Heart left ventricle (tissue), 16 donors: ENCODE measurements at regions of chr20 and their contacts with region 1.

Region 1: DNA sequence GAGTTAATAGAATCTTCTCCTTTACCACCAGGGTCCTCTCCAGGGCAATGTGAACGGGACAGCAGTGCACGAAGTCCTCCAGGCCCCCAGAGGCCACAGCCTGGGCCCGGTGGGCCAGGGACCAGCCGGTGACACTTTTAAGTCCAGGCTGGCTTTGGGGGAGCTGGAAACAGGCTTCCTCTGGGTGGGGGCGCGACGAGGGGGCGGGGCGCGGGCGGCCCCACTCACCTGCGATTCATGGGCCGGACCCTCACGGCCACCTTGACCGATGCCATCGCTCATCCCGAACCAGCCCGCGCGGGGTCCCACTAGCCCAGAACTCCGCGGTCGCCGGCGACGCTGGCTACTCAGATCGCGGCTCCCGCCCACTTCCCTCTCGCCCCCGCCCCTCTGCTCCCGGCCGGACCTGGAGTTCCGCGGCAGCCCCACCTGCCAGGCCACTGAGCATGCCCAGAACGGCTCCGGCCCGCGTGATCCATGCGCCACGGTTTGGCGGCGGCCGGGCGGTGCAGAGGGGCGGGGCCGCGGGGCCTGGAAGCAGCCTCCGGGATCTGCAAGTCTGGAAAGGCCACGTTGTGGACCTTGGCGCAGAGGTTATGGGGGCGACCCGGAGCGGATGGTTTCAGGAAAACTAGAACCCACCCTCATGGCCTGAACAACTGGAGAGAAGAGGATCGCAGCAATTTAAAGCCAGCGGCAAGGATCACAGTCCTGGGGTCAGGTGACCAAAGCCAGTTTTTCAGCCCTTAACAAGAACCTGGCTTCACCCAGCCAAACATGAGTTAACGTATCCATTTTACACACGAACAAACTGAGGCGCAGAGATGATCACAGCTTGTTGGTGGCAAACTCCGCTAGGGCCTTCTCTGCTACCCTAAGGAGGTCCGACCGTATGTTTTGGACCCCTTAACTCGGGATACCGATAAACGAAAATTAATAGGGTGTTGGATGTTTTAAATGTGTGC is at the start of gene KIF16B:
- DNase-seq: peak; percentile 92 to 96 (median 93)
- ATAC-seq: peak; percentile 89 to 98 (median 96)
- H3K4me3 ChIP-seq: peak within 1 kb of the TSS; percentile 63 to 99 (median 89)
- H3K27ac ChIP-seq: peak within 1 kb of the TSS in 11 of 12 donors; percentile 53 to 86 (median 78)
- H3K4me1 ChIP-seq: peaks cover 0 to 36% (median 22%) of the 10 kb centered on the region in 12 donors
- H3K27me3 ChIP-seq: no peaks in the 10 kb centered on the region
- CTCF ChIP-seq: peak in 2 of 12 donors; percentile 1 to 16
- POLR2A ChIP-seq: no peak
- total RNA-seq, gene KIF16B: 12.6 to 31.8 (median 17.8) TPM

Region 2: GRCh38 chr20:16528078-16528477 is 45.2 kb before region 1 on chr20:
- intact Hi-C with region 1: loop called in 1 of 10 experiments (anchors 10 kb)
- DNase-seq: no peak
- ATAC-seq: peak in 1 of 4 donors; percentile 64
- H3K4me3 ChIP-seq: no peak overlapping the region
- H3K27ac ChIP-seq: no peak overlapping the region
- H3K4me1 ChIP-seq: no peaks in the 10 kb centered on the region
- H3K27me3 ChIP-seq: no peaks in the 10 kb centered on the region
- CTCF ChIP-seq: no peak
- POLR2A ChIP-seq: no peak

Region 3: GRCh38 chr20:16729565-16730456 is 156.5 kb after region 1 on chr20 and contains the start of gene SNRPB2:
- intact Hi-C with region 1: loop called in 5 of 10 experiments (anchors 2 to 10 kb)
- DNase-seq: peak; percentile 93 to 96 (median 95)
- ATAC-seq: peak; percentile 97 to 100 (median 100)
- H3K4me3 ChIP-seq: peak within 1 kb of the TSS; percentile 73 to 98 (median 92)
- H3K27ac ChIP-seq: peak within 1 kb of the TSS in 11 of 12 donors; percentile 53 to 89 (median 83)
- H3K4me1 ChIP-seq: peaks cover 6 to 46% (median 14%) of the 10 kb centered on the region in 12 donors
- H3K27me3 ChIP-seq: peaks cover 0 to 31% (median 7%) of the 10 kb centered on the region in 9 donors
- CTCF ChIP-seq: peak in 1 of 12 donors; percentile 6
- POLR2A ChIP-seq: peak in 1 of 2 donors; percentile 76
- total RNA-seq, gene SNRPB2: 20.2 to 39.6 (median 31.3) TPM